ENCODE measurements at regions of chr12 and their contacts with region 1.

Region 1: GRCh38 chr12:53543539-53543938 is 36.3 kb upstream of the NPFF start:
- DNase-seq: peak; percentile 71 to 84 (median 84)
- H3K4me3 ChIP-seq: no peak overlapping the region
- H3K27ac ChIP-seq: no peak overlapping the region
- H3K4me1 ChIP-seq: peaks cover 0 to 4% (median 0%) of the 10 kb centered on the region in 4 experiments
- H3K27me3 ChIP-seq: no peaks in the 10 kb centered on the region

Region 2: GRCh38 chr12:53530920-53531319 is 12.6 kb before region 1 on chr12:
- CTCF ChIA-PET with region 1: interaction called, 24 read pairs
- POLR2A ChIA-PET with region 1: no interaction called
- DNase-seq: no peak
- H3K4me3 ChIP-seq: no peak overlapping the region
- H3K27ac ChIP-seq: no peak overlapping the region
- H3K4me1 ChIP-seq: no peaks in the 10 kb centered on the region
- H3K27me3 ChIP-seq: no peaks in the 10 kb centered on the region

Region 3: DNA sequence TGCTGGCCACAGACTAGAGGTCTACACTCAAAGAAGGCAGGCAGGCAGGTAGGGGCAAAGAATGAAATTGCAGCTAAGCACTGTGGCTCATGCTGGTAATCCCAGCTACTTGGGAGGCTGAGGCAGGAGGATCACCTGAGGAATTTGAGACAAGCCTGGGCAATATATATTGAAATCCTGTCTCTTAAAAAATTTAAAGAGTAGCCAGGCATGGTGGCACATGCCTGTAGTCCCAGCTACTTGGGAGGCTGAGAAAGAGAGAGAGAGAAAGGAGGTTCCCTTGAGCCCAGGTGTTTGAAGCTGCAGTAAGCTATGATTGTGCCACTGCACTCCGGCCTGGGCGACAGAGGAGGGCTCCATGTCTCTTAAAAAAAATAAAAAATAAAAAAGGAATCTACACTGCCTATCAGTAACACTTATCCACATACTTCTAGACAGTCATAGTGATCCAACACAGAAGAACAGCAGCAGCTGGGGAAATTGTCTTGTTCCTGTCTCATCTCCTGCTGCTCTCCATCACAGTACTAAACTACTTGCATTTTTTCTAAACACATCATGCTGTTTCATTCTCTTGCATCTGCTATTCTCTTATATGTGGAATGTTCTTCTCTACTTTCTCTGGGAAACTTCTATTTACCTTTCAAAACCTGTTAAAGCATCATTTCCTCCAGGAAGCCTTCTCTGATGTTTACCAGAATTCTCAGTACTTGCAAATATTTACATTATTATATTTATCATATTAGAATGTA is 25.4 kb after region 1 on chr12:
- CTCF ChIA-PET with region 1: interaction called, 16 read pairs
- POLR2A ChIA-PET with region 1: no interaction called
- DNase-seq: no peak
- H3K4me3 ChIP-seq: no peak overlapping the region
- H3K27ac ChIP-seq: no peak overlapping the region
- H3K4me1 ChIP-seq: peaks cover 7 to 35% (median 22%) of the 10 kb centered on the region in 4 experiments
- H3K27me3 ChIP-seq: no peaks in the 10 kb centered on the region

Region 4: GRCh38 chr12:53675651-53676453 is 132.3 kb after region 1 on chr12 and contains the start of gene ATP5MC2:
- CTCF ChIA-PET with region 1: interaction called, 57 read pairs
- POLR2A ChIA-PET with region 1: interaction called, 9 read pairs
- DNase-seq: peak; percentile 98 to 99 (median 99)
- H3K4me3 ChIP-seq: peak within 1 kb of the TSS; percentile 75 to 96 (median 89)
- H3K27ac ChIP-seq: peak within 1 kb of the TSS; percentile 75 to 91
- H3K4me1 ChIP-seq: peaks cover 3 to 33% (median 23%) of the 10 kb centered on the region in 4 experiments
- H3K27me3 ChIP-seq: peaks cover 0 to 21% (median 5%) of the 10 kb centered on the region in 5 experiments

Measured in common myeloid progenitor, CD34-positive (primary cell).